HCT116 (cell line): ENCODE measurements at regions of chr9 and their contacts with region 1.

Region 1: GRCh38 chr9:128771745-128772519 is at the start of gene ZER1:
- DNase-seq: peak; percentile 64
- ATAC-seq: peak; percentile 92
- H3K4me3 ChIP-seq: peak within 1 kb of the TSS; percentile 94 to 96
- H3K27ac ChIP-seq: peak within 1 kb of the TSS; percentile 90
- H3K4me1 ChIP-seq: peaks cover 11 to 23% of the 10 kb centered on the region in 2 experiments; a peak in 3 of 4 replicates
- H3K27me3 ChIP-seq: no peaks in the 10 kb centered on the region
- CTCF ChIP-seq: no peak
- POLR2A ChIP-seq: no peak
- RAD21 ChIP-seq: no peak
- total RNA-seq, gene ZER1: 18.0 TPM

Region 2: DNA sequence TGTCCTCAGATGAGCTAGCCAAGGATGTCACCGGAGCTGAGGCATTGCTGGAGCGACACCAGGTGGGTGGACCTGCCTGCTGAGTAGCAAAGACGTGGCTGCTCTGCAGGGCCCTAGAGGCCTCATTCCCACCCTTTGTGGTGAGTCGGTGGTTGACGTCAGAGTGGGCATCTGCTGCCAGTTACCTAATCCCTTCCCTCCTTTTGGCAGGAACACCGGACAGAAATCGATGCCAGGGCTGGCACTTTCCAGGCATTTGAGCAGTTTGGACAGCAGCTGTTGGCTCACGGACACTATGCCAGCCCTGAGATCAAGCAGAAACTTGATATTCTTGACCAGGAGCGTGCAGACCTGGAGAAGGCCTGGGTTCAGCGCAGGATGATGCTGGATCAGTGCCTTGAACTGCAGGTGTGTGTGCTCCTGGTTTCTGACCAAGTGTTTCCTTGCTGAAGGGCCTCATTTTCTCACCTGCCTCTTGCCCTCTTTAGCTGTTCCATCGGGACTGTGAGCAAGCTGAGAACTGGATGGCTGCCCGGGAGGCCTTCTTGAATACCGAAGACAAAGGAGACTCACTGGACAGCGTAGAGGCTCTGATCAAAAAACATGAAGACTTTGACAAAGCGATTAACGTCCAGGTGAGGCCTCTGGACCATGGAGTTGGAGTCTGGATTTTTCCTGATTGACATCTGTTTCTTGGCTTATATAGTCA is 164.1 kb before region 1 on chr9:
- CTCF ChIA-PET with region 1: no interaction called
- POLR2A ChIA-PET with region 1: no interaction called
- RAD21 ChIA-PET with region 1: no interaction called
- intact Hi-C with region 1: no loop called
- DNase-seq: no peak
- ATAC-seq: no peak
- H3K4me3 ChIP-seq: no peak overlapping the region
- H3K27ac ChIP-seq: no peak overlapping the region
- H3K4me1 ChIP-seq: no peaks in the 10 kb centered on the region
- H3K27me3 ChIP-seq: no peaks in the 10 kb centered on the region
- CTCF ChIP-seq: no peak
- POLR2A ChIP-seq: no peak
- RAD21 ChIP-seq: no peak

Region 3: DNA sequence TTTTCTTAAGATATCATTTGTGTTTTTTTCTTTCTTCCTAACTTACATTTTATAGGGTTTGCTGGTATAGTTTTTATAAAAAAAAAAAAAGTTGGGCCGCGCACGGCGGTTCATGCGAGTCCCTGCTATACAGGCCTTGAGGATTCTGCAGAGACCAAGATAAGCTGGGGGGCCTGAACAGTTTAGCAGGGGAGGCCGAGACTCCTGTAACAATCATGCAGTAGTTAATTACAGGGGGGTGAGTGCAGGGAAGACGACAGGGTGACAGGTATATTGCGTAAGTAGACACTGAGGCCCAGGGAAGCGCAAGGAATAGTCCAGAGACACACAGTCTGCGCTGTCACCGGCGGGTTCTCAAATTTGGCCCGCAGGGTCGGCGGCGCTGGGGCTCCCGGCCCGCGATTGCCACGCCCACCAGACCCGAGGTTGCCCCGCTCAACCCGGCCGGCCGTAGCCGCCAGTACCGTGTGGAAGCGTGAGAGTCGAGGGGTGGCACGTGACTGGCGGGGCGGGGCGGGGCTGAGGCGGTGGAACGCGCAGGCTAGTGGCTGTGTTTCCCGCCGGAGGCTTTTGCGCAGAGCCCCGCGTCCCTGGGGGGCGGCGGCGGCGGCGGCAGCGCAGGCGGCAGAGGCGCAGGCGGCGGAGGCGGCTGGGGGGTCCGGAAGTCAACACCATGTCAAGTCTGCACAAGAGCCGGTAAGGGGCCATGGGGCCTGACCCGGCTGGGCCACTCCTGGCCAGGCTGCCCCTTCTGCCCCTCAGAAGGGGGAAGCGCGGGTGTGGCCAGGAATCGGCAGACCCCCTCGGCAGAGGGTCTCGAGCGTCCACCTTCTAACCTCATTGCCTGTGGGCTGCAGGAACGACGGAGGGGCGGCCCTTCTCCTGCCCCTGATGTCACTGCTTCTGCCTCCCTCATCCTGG is 15.0 kb after region 1 on chr9 and contains the start of gene TBC1D13:
- CTCF ChIA-PET with region 1: no interaction called
- POLR2A ChIA-PET with region 1: interaction called, 4 read pairs
- RAD21 ChIA-PET with region 1: no interaction called
- intact Hi-C with region 1: loop called (anchors 1 kb)
- DNase-seq: peak; percentile 44
- ATAC-seq: peak; percentile 96
- H3K4me3 ChIP-seq: peak within 1 kb of the TSS; percentile 87 to 94
- H3K27ac ChIP-seq: peak within 1 kb of the TSS; percentile 77
- H3K4me1 ChIP-seq: peaks cover 12 to 28% of the 10 kb centered on the region in 2 experiments; a peak in 3 of 4 replicates
- H3K27me3 ChIP-seq: no peaks in the 10 kb centered on the region
- CTCF ChIP-seq: no peak
- POLR2A ChIP-seq: no peak
- RAD21 ChIP-seq: no peak
- total RNA-seq, gene TBC1D13: 17.5 TPM

Region 4: DNA sequence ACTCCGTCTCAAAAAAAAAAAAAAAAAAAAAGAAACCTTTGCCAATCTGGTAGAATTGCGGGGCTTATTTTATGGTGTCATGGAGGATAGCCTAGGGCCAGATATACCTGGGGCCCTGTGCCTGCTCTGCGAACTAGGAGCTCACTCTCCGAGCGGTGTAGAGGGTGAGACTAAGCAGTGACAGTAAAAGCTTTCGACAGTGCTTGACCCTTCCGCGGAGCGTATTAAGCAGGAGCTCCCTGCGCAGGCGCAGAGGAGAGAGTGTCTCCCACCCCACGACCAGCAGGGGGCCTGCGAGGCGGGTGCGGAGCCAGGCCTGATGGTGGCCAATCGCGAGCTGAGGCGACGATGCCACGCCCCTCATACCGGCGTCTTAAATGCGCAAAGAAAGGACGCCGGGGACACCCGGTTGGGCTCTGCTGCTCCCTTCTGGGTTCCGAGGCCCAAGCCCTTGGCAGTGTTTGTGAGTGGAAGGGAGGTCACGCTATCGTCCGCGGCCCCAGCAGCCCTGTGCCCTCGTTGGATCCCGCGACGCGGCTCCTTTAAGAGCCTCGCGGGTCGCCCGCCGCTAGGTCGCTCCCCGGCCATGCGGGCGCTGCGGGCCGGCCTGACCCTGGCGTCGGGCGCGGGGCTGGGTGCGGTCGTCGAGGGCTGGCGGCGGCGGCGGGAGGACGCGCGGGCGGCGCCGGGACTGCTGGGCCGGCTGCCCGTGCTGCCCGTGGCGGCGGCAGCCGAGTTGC is 46.3 kb after region 1 on chr9 and contains the start of gene ENDOG:
- CTCF ChIA-PET with region 1: no interaction called
- POLR2A ChIA-PET with region 1: no interaction called
- RAD21 ChIA-PET with region 1: no interaction called
- intact Hi-C with region 1: no loop called
- DNase-seq: peak; percentile 93
- ATAC-seq: peak; percentile 82
- H3K4me3 ChIP-seq: peak within 1 kb of the TSS; percentile 54 to 71
- H3K27ac ChIP-seq: peak within 1 kb of the TSS; percentile 85
- H3K4me1 ChIP-seq: peaks cover 12 to 23% of the 10 kb centered on the region in 2 experiments; a peak in 3 of 4 replicates
- H3K27me3 ChIP-seq: no peaks in the 10 kb centered on the region
- CTCF ChIP-seq: peak; percentile 46 to 92 (median 70); a peak in 5 of 6 replicates
- POLR2A ChIP-seq: peak; percentile 96
- RAD21 ChIP-seq: peak; percentile 28; the same call in 1 of the 2 replicates
- total RNA-seq, gene ENDOG: 27.2 TPM

Region 5: DNA sequence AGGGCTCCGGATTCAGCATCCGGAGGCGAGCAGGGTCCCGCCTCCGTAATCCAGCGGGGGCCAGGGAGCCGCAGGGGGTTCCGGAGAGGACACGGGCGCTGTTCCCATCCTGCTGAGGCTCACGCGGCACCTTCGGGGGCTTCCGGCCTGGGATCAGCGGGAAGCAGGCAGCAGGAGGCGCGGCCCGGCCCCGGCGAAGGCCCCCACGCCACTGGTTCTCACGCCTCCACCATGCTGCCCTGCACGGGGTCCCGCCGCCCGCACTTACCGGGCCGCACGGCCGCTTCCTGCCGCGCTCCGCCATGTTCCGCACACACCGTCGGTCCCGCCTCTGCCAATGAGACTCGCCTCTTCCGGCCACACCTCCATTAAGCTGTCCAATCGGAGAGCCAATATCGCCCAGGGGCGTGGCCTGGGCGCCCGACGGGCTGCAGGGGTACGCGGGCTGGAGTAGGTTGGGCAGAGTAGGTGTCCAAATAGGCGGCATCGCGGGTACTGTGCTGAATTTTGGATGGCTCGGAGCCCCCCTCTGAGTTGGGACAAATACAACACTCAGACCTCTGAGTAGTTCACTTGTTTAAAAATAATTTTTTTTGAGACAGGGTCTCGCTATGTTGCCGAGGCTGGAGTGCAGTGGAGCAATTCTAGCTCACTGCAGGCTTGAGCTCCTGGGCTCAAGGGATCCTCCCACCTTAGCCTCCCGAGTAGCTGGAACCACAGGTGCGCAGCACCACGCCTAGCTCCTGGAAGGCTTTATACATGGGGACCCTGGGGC is 57.7 kb after region 1 on chr9 and contains the start of gene SPOUT1:
- CTCF ChIA-PET with region 1: no interaction called
- POLR2A ChIA-PET with region 1: no interaction called
- RAD21 ChIA-PET with region 1: no interaction called
- intact Hi-C with region 1: no loop called
- DNase-seq: peak; percentile 81
- ATAC-seq: peak; percentile 94
- H3K4me3 ChIP-seq: peak within 1 kb of the TSS; percentile 95 to 97
- H3K27ac ChIP-seq: peak within 1 kb of the TSS; percentile 78
- H3K4me1 ChIP-seq: peaks cover 11 to 17% of the 10 kb centered on the region in 2 experiments
- H3K27me3 ChIP-seq: no peaks in the 10 kb centered on the region
- CTCF ChIP-seq: no peak
- POLR2A ChIP-seq: peak; percentile 80
- RAD21 ChIP-seq: no peak
- total RNA-seq, gene SPOUT1: 70.4 TPM

Region 6: GRCh38 chr9:129850821-129851540 is 1079.0 kb after region 1 on chr9:
- CTCF ChIA-PET with region 1: no interaction called
- POLR2A ChIA-PET with region 1: no interaction called
- RAD21 ChIA-PET with region 1: no interaction called
- intact Hi-C with region 1: no loop called
- DNase-seq: no peak
- ATAC-seq: no peak
- H3K4me3 ChIP-seq: no peak overlapping the region
- H3K27ac ChIP-seq: no peak overlapping the region
- H3K4me1 ChIP-seq: no peaks in the 10 kb centered on the region
- H3K27me3 ChIP-seq: no peaks in the 10 kb centered on the region
- CTCF ChIP-seq: no peak
- POLR2A ChIP-seq: no peak
- RAD21 ChIP-seq: no peak